Posterior vena cava (tissue), 2 donors: ENCODE measurements at regions of chr12 and their contacts with region 1.

Region 1: DNA sequence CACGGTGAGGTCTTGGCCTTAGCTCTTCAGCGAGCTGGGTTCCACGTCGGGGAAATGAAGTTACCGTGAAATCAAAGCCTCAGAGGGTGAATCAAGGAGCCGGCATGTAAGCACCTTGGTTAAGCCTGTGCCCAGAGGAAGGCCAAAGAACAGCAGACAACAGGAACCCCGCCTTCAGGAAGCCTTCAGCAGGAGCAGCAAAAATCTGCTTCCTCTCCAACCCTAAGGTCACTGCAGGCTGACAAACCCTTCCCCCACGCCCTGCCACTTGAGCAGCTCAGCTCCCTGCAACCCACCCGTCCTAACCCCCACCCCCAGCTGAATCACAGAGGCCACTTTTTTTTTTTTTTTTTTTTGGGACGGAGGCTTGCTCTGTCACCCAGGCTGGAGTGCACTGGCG is 72.9 kb upstream of the LTA4H start:
- DNase-seq: no peak

Region 2: GRCh38 chr12:95511977-95512376 is 596.3 kb before region 1 on chr12:
- intact Hi-C with region 1: loop called in 1 of 2 experiments (anchors 5 kb)
- DNase-seq: no peak

Region 3: DNA sequence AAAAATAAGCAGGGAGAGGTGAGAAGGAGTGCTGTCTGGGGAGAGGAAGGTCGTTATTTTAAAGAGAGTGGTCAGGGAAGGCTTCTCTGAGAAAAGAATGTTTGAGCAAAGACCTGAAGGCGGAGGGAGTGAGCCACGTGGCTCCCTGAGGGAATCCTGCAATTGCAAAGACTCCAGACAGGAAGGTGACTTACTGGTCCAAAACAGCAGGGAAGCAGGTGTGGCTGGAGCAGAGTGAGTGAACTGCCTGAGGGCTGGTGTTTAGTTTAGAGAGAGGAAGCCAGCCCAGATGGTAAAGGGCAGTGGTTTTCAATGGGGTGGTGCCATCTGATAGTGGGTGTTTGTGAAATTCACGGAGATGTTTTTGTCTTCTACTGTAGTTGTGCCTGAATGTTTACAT is 14.1 kb before region 1 on chr12:
- intact Hi-C with region 1: no loop called
- DNase-seq: no peak

Region 4: GRCh38 chr12:96153131-96153725 is 44.9 kb after region 1 on chr12:
- intact Hi-C with region 1: no loop called
- DNase-seq: no peak